Common myeloid progenitor, CD34-positive (primary cell): ENCODE measurements at regions of chr2 and their contacts with region 1.

Region 1: GRCh38 chr2:96509114-96509846 is 4.1 kb upstream of the NEURL3 start:
- DNase-seq: peak; percentile 72 to 80 (median 74)
- H3K4me3 ChIP-seq: peak overlapping the region in 1 of 7 experiments; percentile 15
- H3K27ac ChIP-seq: no peak overlapping the region
- H3K4me1 ChIP-seq: peaks cover 0 to 19% (median 9%) of the 10 kb centered on the region in 4 experiments
- H3K27me3 ChIP-seq: peaks cover 0 to 2% (median 0%) of the 10 kb centered on the region in 5 experiments

Region 2: DNA sequence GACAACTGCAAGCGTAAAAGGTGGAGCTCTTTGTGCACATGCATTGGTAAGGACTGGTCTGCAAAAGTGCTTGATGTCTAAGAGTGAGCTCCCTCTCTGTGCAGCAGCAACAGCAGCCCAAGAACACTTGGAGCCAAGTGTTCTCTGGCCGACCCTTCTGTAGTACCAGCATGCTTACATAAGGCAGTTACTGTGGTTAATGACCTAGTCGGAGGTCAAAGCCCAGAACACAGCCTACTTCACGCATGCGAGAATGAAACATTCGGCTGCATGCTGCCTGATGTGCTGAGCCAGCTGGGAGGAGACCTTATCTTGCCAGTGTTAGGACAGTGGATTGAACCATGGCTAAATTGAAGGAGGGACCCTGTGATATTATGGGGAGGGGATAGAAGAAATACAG is 152.4 kb before region 1 on chr2:
- CTCF ChIA-PET with region 1: interaction called, 20 read pairs
- POLR2A ChIA-PET with region 1: no interaction called
- DNase-seq: no peak
- H3K4me3 ChIP-seq: no peak overlapping the region
- H3K27ac ChIP-seq: no peak overlapping the region
- H3K4me1 ChIP-seq: no peaks in the 10 kb centered on the region
- H3K27me3 ChIP-seq: no peaks in the 10 kb centered on the region

Region 3: GRCh38 chr2:96470636-96471035 is 38.6 kb before region 1 on chr2:
- CTCF ChIA-PET with region 1: interaction called, 46 read pairs
- POLR2A ChIA-PET with region 1: no interaction called
- DNase-seq: peak; percentile 51 to 60 (median 51)
- H3K4me3 ChIP-seq: peak overlapping the region; percentile 8 to 68 (median 36)
- H3K27ac ChIP-seq: no peak overlapping the region
- H3K4me1 ChIP-seq: peaks cover 0 to 9% (median 6%) of the 10 kb centered on the region in 4 experiments
- H3K27me3 ChIP-seq: no peaks in the 10 kb centered on the region

Region 4: GRCh38 chr2:96489663-96490062 is 19.6 kb before region 1 on chr2:
- CTCF ChIA-PET with region 1: interaction called, 12 read pairs
- POLR2A ChIA-PET with region 1: no interaction called
- DNase-seq: peak in 2 of 3 donors; percentile 30 to 36
- H3K4me3 ChIP-seq: no peak overlapping the region
- H3K27ac ChIP-seq: no peak overlapping the region
- H3K4me1 ChIP-seq: peaks cover 0 to 17% (median 14%) of the 10 kb centered on the region in 4 experiments
- H3K27me3 ChIP-seq: no peaks in the 10 kb centered on the region

Region 5: DNA sequence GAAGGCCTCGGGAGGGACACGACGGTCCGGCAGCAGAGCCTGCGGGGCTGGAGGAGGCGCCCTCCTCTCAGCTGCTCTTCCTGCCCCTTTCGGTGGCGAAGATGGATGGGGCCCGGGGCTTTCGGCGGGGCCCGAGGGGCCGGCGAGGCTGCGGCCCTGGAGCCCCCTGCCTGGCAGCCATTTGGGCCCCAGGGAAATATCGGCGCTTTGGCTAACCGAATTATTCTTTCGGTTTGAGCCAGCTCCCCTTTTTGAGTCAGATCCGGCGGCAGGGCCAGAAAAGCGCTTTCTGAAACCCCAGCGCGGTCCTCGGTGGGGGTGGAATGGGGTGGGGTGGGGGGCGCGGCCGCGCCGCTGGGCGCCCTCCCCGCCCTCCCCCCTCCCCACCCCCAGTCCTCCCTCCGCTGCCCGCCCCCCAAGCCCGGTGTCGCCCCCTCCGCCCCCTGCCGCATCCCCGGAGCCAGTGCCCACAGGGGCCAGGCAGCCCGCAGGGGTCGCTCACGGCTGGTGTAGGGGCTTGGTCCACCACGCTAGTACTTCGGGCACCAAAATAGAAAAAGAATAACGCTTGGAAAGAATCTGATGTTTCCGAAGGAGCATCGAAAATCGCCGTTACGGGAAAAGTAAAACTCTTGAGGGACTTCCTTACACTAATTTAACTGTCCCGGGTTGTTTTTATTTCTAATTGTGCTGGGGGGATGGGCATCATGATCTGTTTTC is 18.2 kb after region 1 on chr2:
- CTCF ChIA-PET with region 1: interaction called, 17 read pairs
- POLR2A ChIA-PET with region 1: no interaction called
- DNase-seq: peak; percentile 82 to 86 (median 82)
- H3K4me3 ChIP-seq: peak overlapping the region; percentile 30 to 79 (median 66)
- H3K27ac ChIP-seq: peak overlapping the region; percentile 91 to 94
- H3K4me1 ChIP-seq: peaks cover 10 to 68% (median 64%) of the 10 kb centered on the region in 4 experiments
- H3K27me3 ChIP-seq: no peaks in the 10 kb centered on the region